SK-N-SH (cell line): ENCODE measurements at regions of chr1 and their contacts with region 1.

Region 1: DNA sequence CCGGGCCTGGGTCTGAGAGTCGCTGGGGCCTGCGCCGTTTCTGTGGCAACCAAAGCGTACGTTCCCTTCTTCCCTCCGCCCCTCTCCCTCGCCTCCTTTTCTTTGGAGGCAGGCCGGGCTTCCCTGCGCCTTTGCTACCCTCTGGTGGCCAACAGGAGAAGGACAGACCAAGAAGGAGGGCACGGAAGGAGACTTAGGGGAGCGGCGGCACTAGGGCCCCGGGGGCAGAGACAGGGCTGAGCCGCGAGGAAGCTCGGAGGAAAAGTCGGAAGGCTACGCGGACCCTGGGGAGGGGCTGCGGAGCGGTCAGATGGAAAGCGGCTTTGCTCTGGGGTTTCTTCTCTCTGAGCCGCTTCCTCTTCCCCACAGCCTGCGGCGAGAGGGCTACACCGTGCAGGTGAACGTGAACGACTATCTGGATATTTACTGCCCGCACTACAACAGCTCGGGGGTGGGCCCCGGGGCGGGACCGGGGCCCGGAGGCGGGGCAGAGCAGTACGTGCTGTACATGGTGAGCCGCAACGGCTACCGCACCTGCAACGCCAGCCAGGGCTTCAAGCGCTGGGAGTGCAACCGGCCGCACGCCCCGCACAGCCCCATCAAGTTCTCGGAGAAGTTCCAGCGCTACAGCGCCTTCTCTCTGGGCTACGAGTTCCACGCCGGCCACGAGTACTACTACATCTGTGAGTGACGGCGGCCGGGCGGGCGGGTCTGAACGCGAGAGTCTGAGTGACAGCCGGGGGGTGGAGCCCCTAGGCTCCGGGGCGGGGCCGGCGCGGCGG is 6.3 kb downstream of the EFNA3 start:
- DNase-seq: peak; percentile 94
- H3K4me3 ChIP-seq: peak overlapping the region; percentile 77 to 79
- H3K27ac ChIP-seq: peak overlapping the region; percentile 69 to 94
- H3K4me1 ChIP-seq: peaks cover 13 to 26% of the 10 kb centered on the region in 2 experiments; a peak in 3 of 4 replicates
- H3K27me3 ChIP-seq: peaks cover 15% of the 10 kb centered on the region
- CTCF ChIP-seq: peak; percentile 82
- EP300 ChIP-seq: peak in 1 of 2 experiments; percentile 26; a peak in 1 of 4 replicates
- RAD21 ChIP-seq: peak; percentile 96

Region 2: GRCh38 chr1:155001675-155002463 is 83.0 kb before region 1 on chr1:
- CTCF ChIA-PET with region 1: interaction called, 13 read pairs
- POLR2A ChIA-PET with region 1: no interaction called
- DNase-seq: peak; percentile 96
- H3K4me3 ChIP-seq: peak overlapping the region; percentile 57 to 71
- H3K27ac ChIP-seq: peak overlapping the region; percentile 92 to 96
- H3K4me1 ChIP-seq: peaks cover 19 to 33% of the 10 kb centered on the region in 2 experiments
- H3K27me3 ChIP-seq: no peaks in the 10 kb centered on the region
- CTCF ChIP-seq: peak; percentile 69
- EP300 ChIP-seq: no peak
- RAD21 ChIP-seq: no peak

Region 3: DNA sequence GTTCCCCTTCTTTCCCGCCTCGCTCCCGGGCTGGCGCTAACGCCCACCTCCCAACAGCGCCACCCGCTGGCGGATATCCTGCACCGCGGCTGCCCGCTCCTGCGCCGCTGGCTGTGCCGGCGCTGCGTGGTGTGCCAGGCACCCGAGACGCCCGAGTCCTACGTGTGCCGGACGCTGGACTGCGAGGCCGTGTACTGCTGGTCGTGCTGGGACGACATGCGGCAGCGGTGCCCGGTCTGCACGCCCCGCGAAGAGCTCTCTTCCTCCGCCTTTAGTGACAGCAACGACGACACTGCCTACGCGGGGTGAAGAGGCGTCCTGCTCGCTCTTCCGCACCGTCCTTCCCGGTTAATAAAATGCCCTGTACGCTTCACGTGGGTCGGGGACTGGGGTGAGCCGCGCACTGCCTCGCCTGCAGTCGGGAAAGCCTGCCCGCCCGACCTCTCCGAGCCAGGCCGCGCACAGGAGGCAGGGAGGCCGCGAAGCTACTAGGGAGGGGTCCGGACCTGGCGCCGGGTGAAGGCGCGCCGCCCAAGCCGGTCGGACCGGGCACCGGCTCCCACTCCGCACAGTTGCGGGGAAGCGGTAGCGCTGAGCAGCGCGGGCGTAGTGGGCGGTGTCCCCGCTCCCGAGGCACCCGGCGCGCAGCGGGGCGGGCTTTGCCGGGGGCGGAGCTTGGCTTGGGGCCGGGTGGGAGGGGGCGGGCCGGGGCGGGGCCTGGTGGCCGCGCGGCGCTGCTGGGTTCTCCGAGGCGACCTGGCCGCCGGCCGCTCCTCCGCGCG is 34.2 kb before region 1 on chr1 and contains the start of gene ADAM15:
- CTCF ChIA-PET with region 1: interaction called, 573 read pairs
- POLR2A ChIA-PET with region 1: interaction called, 5 read pairs
- DNase-seq: peak; percentile 99
- H3K4me3 ChIP-seq: peak within 1 kb of the TSS; percentile 84 to 98
- H3K27ac ChIP-seq: peak within 1 kb of the TSS; percentile 61 to 92
- H3K4me1 ChIP-seq: peaks cover 7 to 42% of the 10 kb centered on the region in 2 experiments
- H3K27me3 ChIP-seq: no peaks in the 10 kb centered on the region
- CTCF ChIP-seq: peak; percentile 88
- EP300 ChIP-seq: no peak
- RAD21 ChIP-seq: peak; percentile 40
- polyA plus RNA-seq, gene ADAM15: 60.1 and 64.1 TPM in 2 replicates

Region 4: DNA sequence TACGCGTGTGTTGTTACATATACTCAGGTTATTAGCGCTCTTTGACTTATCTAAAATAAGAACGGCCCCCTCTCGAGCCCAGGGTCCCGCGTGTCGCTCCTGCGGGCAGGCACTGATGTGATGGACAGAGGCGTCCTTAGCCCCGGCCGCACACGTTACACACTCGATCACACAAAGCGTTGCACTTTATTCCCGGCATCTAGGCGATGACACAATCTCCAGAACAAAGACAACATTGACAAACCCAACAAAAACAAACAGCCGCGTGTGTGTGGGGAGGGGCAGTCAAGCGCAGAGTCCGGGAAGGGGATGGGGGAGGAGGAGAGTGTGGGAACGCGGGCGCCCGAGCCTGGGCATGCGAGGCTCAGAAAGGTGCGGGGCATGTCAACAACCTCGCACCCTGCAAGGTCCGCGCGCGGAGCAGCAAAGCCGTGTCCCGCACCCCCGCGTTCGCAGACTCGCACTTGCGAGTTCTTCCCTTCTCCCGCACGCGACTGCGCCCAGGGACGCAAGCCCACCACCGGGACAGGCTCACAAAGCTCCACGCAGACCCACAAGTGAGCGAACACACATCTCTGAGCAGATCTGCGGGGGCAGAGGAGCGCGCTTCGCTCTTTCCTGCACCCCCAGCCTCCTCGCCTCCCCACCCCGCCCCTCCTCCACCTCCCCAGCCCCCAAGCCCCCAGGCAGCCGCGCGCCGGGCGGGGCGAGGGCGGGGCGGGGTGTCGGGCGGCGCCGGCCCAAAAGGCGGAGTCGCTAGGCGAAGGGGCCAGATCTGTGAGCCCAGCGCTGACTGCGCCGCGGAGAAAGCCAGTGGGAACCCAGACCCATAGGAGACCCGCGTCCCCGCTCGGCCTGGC is 42.4 kb after region 1 on chr1 and contains the start of gene EFNA1:
- CTCF ChIA-PET with region 1: interaction called, 25 read pairs
- POLR2A ChIA-PET with region 1: no interaction called
- DNase-seq: peak; percentile 84
- H3K4me3 ChIP-seq: peak within 1 kb of the TSS; percentile 63 to 67
- H3K27ac ChIP-seq: peak within 1 kb of the TSS in 1 of 2 experiments; percentile 77; a peak in 2 of 4 replicates
- H3K4me1 ChIP-seq: peaks cover 19 to 45% of the 10 kb centered on the region in 2 experiments
- H3K27me3 ChIP-seq: no peaks in the 10 kb centered on the region
- CTCF ChIP-seq: no peak
- EP300 ChIP-seq: no peak
- RAD21 ChIP-seq: no peak
- polyA plus RNA-seq, gene EFNA1: 14.4 and 15.3 TPM in 2 replicates